T-cell (primary cell): ENCODE measurements at regions of chr13 and their contacts with region 1.

Region 1: GRCh38 chr13:74026753-74027152 is 107.5 kb downstream of the KLF12 start:
- DNase-seq: peak; percentile 37 to 83 (median 68)
- ATAC-seq: peak; percentile 91 to 99 (median 98)
- H3K4me3 ChIP-seq: peak overlapping the region in 1 of 2 donors; percentile 27
- H3K4me3 Mint-ChIP-seq: peak overlapping the region; percentile 74 to 84 (median 76)
- H3K27ac ChIP-seq: peak overlapping the region; percentile 86
- H3K27ac Mint-ChIP-seq: peak overlapping the region; percentile 92 to 98
- H3K4me1 ChIP-seq: peaks cover 9 to 58% of the 10 kb centered on the region in 2 experiments
- H3K4me1 Mint-ChIP-seq: peaks cover 87 to 93% (median 88%) of the 10 kb centered on the region in 3 donors
- H3K27me3 ChIP-seq: no peaks in the 10 kb centered on the region
- H3K27me3 Mint-ChIP-seq: no peaks in the 10 kb centered on the region

Region 2: GRCh38 chr13:73809561-73809960 is 217.2 kb before region 1 on chr13:
- CTCF ChIA-PET with region 1: interaction called in 1 of 2 experiments, 12 read pairs
- POLR2A ChIA-PET with region 1: interaction called in 1 of 2 experiments, 4 read pairs
- DNase-seq: no peak
- ATAC-seq: no peak
- H3K4me3 ChIP-seq: no peak overlapping the region
- H3K4me3 Mint-ChIP-seq: no peak overlapping the region
- H3K27ac ChIP-seq: no peak overlapping the region
- H3K27ac Mint-ChIP-seq: peak overlapping the region; percentile 24 to 48
- H3K4me1 ChIP-seq: peaks cover 0 to 3% of the 10 kb centered on the region in 2 experiments
- H3K4me1 Mint-ChIP-seq: peaks cover 8 to 35% (median 22%) of the 10 kb centered on the region in 3 donors
- H3K27me3 ChIP-seq: no peaks in the 10 kb centered on the region
- H3K27me3 Mint-ChIP-seq: no peaks in the 10 kb centered on the region